CD8-positive, alpha-beta T cell (primary cell): ENCODE measurements at regions of chr5 and their contacts with region 1.

Region 1: DNA sequence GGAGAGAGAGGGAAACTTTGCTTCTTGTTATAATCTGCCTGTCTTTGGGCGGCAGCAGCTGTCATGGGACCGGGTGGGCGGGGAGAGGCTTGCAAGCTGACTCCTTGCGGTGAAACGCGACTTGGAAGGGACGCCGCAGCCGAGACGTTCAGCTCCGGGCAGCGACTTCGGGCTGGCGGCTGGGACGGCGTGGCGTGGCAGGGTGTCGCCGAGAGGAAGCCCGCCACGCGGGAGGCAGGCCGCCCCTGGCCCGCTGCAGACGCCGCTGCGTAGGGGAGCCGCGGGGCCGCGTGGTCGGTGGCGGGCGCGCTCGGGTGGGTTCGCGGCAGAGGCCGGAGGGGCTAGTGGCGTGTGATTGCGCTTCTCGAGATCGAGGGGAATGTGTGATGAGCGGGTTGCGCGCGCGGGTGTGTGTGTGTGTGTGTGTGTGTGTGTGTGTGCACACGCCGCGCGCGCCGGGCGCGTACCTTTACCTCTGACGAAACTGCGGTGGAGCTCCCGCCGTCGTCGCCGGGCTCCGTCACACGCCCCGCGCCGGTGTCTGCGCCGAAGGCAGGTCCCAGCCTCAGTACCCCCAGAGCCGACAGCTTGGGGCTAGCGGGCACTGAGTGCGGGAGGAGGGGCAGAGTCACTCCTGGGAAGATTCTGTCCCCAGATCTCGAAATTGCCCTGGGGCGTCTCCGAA is 1.7 kb downstream of the PPARGC1B start:
- DNase-seq: peak; percentile 39 to 85 (median 72)
- ATAC-seq: peak; percentile 53
- H3K4me3 ChIP-seq: peak overlapping the region; percentile 91 to 98
- H3K4me3 Mint-ChIP-seq: peak overlapping the region; percentile 88
- H3K27ac ChIP-seq: peak overlapping the region in 1 of 2 experiments; percentile 70
- H3K27ac Mint-ChIP-seq: peak overlapping the region; percentile 82
- H3K4me1 ChIP-seq: peaks cover 8% of the 10 kb centered on the region
- H3K4me1 Mint-ChIP-seq: peaks cover 8% of the 10 kb centered on the region
- H3K27me3 ChIP-seq: no peaks in the 10 kb centered on the region
- H3K27me3 Mint-ChIP-seq: no peaks in the 10 kb centered on the region
- CTCF ChIP-seq: no peak

Region 2: GRCh38 chr5:149357370-149358293 is 374.1 kb before region 1 on chr5 and contains the start of gene PCYOX1L:
- CTCF ChIA-PET with region 1: no interaction called
- POLR2A ChIA-PET with region 1: no interaction called
- intact Hi-C with region 1: loop called in 1 of 2 experiments (anchors 10 kb)
- DNase-seq: peak; percentile 89 to 99 (median 95)
- ATAC-seq: peak; percentile 96
- H3K4me3 ChIP-seq: peak within 1 kb of the TSS; percentile 83 to 88
- H3K4me3 Mint-ChIP-seq: peak within 1 kb of the TSS; percentile 93
- H3K27ac ChIP-seq: peak within 1 kb of the TSS; percentile 63 to 74
- H3K27ac Mint-ChIP-seq: peak within 1 kb of the TSS; percentile 92
- H3K4me1 ChIP-seq: peaks cover 37% of the 10 kb centered on the region
- H3K4me1 Mint-ChIP-seq: peaks cover 67% of the 10 kb centered on the region
- H3K27me3 ChIP-seq: no peaks in the 10 kb centered on the region
- H3K27me3 Mint-ChIP-seq: no peaks in the 10 kb centered on the region
- CTCF ChIP-seq: no peak
- total RNA-seq, gene PCYOX1L: 18.9 to 21.9 TPM

Region 3: DNA sequence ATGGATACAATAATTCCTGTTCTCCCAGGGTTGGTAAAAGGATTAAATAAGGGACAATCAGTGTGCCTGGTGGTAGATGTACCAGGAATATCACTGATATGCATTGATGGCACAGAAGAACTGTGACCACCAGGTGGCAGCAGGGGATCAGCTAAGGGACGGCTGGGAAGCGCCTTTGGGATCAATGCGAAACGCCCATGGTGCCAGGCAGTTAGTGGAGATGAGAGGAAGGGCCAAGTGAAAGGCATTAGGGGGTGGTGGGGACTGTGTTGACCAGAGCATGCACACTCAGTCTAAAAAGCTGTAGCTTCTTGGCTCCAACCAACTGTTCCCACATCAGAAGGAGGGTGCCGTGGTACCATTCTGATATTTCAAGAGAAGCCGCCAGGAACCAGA is 94.9 kb before region 1 on chr5:
- CTCF ChIA-PET with region 1: interaction called, 5 read pairs
- POLR2A ChIA-PET with region 1: no interaction called
- intact Hi-C with region 1: loop called in 1 of 2 experiments (anchors 5 kb)
- DNase-seq: peak in 5 of 9 experiments; percentile 52 to 79 (median 75)
- ATAC-seq: peak; percentile 67
- H3K4me3 ChIP-seq: no peak overlapping the region
- H3K4me3 Mint-ChIP-seq: no peak overlapping the region
- H3K27ac ChIP-seq: no peak overlapping the region
- H3K27ac Mint-ChIP-seq: no peak overlapping the region
- H3K4me1 ChIP-seq: no peaks in the 10 kb centered on the region
- H3K4me1 Mint-ChIP-seq: no peaks in the 10 kb centered on the region
- H3K27me3 ChIP-seq: no peaks in the 10 kb centered on the region
- H3K27me3 Mint-ChIP-seq: no peaks in the 10 kb centered on the region
- CTCF ChIP-seq: peak; percentile 86

Region 4: GRCh38 chr5:149960272-149961185 is 228.7 kb after region 1 on chr5 and contains the start of gene SLC26A2:
- CTCF ChIA-PET with region 1: no interaction called
- POLR2A ChIA-PET with region 1: no interaction called
- intact Hi-C with region 1: loop called (anchors 1 to 2 kb)
- DNase-seq: peak; percentile 83 to 97 (median 93)
- ATAC-seq: peak; percentile 95
- H3K4me3 ChIP-seq: peak within 1 kb of the TSS; percentile 85 to 99
- H3K4me3 Mint-ChIP-seq: peak within 1 kb of the TSS; percentile 97
- H3K27ac ChIP-seq: peak within 1 kb of the TSS; percentile 66 to 77
- H3K27ac Mint-ChIP-seq: peak within 1 kb of the TSS; percentile 97
- H3K4me1 ChIP-seq: peaks cover 26% of the 10 kb centered on the region
- H3K4me1 Mint-ChIP-seq: peaks cover 39% of the 10 kb centered on the region
- H3K27me3 ChIP-seq: no peaks in the 10 kb centered on the region
- H3K27me3 Mint-ChIP-seq: no peaks in the 10 kb centered on the region
- CTCF ChIP-seq: no peak
- total RNA-seq, gene SLC26A2: 2.0 to 2.2 TPM

Region 5: DNA sequence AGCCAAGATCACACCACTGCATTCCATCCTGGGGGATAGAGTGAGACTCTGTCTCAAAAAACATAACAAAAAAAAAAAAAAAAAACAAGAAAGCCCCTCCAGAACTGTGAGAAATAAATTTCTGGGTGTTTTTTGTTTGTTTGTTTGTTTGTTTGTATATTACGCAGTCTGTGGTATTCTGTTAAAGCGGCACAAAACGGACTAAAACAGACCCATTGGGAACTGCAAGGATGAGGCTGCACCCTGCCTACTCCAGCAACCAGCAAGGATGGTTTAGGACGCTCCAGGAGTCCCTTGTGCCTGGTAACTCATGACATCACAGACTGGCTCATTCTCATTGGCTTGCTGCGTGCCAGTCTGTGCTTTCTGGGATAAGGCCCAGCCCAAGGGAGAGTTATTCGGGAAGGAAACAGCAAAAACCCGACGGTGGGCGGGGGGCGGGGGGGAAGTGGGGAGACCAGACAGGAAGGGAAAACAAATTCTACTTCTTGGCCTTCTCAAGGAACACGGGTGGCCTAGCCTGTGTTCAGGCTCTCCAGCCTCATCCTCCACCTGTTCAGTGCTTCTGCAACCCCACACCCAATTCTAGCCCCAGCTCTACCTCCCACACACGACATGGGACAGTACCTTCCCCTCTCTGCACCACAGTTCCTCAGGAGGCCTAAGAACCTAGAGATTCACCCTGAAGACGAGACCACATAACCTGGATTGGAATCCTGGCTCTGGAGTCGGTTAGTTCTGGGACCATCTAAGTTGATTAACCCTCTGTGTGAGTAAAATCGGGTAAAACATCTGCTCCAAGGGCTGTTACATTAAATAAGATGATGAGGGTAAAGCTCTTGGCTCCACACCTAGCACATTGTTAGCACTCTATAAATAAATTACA is 678.1 kb after region 1 on chr5:
- CTCF ChIA-PET with region 1: no interaction called
- POLR2A ChIA-PET with region 1: no interaction called
- intact Hi-C with region 1: loop called in 1 of 2 experiments (anchors 5 kb)
- DNase-seq: peak in 8 of 9 experiments; percentile 15 to 80 (median 44)
- ATAC-seq: no peak
- H3K4me3 ChIP-seq: peak overlapping the region; percentile 88 to 90
- H3K4me3 Mint-ChIP-seq: peak overlapping the region; percentile 100
- H3K27ac ChIP-seq: peak overlapping the region; percentile 24 to 99
- H3K27ac Mint-ChIP-seq: peak overlapping the region; percentile 100
- H3K4me1 ChIP-seq: peaks cover 39% of the 10 kb centered on the region
- H3K4me1 Mint-ChIP-seq: peaks cover 45% of the 10 kb centered on the region
- H3K27me3 ChIP-seq: no peaks in the 10 kb centered on the region
- H3K27me3 Mint-ChIP-seq: no peaks in the 10 kb centered on the region
- CTCF ChIP-seq: no peak